Mammary epithelial cell (primary cell): ENCODE measurements at regions of chr11 and their contacts with region 1.

Region 1: DNA sequence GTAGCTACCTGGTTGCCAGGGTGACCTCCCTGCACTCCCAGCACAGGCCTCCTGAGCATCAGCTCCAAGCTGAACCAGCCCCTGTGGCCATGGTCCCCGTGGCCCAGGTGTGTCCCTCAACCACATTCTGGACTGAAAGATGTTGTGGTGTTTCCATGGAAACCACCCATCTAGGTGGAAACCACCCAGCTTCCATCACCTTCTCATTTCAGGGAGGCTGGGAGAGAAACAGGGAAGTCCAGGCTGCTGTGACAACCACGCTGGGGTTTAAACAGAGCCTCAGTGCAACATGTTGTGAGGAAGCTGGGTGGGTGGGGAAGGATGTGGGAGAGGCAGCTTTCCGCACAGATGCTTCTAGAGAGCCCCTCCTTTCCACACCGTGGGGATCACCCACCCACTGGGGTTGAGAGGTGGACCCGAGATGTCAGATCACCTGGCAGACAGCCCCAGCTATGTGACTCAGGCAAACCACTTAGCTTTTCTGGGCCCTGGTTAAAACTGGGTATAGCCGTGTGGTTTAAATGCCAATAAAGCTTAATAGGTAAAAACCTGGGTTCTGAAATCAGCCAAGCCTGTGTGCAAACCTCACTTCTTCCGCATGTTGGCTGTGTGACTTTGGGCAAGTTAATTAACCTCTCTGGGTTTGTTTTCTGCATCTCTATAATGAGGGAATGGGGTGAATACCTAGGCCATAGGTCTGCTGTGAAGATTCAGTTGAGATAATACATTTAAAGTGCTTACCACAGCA is 46.4 kb downstream of the CD82 start:
- DNase-seq: peak; percentile 21
- H3K4me3 ChIP-seq: no peak overlapping the region
- H3K27ac ChIP-seq: no peak overlapping the region
- H3K4me1 ChIP-seq: no peaks in the 10 kb centered on the region
- H3K27me3 ChIP-seq: no peaks in the 10 kb centered on the region
- CTCF ChIP-seq: no peak

Region 2: DNA sequence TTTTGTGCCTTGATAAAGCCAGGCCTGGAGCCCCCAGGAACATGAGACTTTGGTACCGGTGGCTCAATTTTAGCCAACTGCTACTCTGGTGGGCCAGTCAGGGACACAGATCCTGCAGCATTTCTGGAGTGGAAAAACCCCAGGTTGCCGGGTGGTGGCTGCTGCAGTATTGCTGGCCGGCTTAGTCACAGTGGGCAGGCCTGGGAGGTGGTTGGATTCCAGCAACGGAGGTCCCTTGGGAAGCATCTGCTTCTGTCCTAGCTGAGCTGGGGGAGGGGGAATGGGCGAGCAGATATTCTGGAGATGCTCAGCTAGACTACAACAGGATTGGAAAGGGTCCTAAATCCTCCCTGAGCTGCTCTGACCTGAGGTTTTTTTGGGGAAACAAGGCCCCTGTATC is 595.7 kb before region 1 on chr11:
- CTCF ChIA-PET with region 1: no interaction called
- dilution Hi-C with region 1: no loop called
- in situ Hi-C with region 1: no loop called
- intact Hi-C with region 1: no loop called
- DNase-seq: no peak
- H3K4me3 ChIP-seq: no peak overlapping the region
- H3K27ac ChIP-seq: no peak overlapping the region
- H3K4me1 ChIP-seq: no peaks in the 10 kb centered on the region
- H3K27me3 ChIP-seq: no peaks in the 10 kb centered on the region
- CTCF ChIP-seq: no peak

Region 3: GRCh38 chr11:44125598-44125997 is 486.3 kb before region 1 on chr11:
- CTCF ChIA-PET with region 1: no interaction called
- dilution Hi-C with region 1: no loop called
- in situ Hi-C with region 1: no loop called
- intact Hi-C with region 1: no loop called
- DNase-seq: no peak
- H3K4me3 ChIP-seq: no peak overlapping the region
- H3K27ac ChIP-seq: no peak overlapping the region
- H3K4me1 ChIP-seq: no peaks in the 10 kb centered on the region
- H3K27me3 ChIP-seq: no peaks in the 10 kb centered on the region
- CTCF ChIP-seq: no peak

Region 4: GRCh38 chr11:44456544-44457300 is 155.1 kb before region 1 on chr11:
- CTCF ChIA-PET with region 1: no interaction called
- dilution Hi-C with region 1: no loop called
- in situ Hi-C with region 1: no loop called
- intact Hi-C with region 1: no loop called
- DNase-seq: no peak
- H3K4me3 ChIP-seq: no peak overlapping the region
- H3K27ac ChIP-seq: no peak overlapping the region
- H3K4me1 ChIP-seq: no peaks in the 10 kb centered on the region
- H3K27me3 ChIP-seq: no peaks in the 10 kb centered on the region
- CTCF ChIP-seq: peak; percentile 48

Region 5: DNA sequence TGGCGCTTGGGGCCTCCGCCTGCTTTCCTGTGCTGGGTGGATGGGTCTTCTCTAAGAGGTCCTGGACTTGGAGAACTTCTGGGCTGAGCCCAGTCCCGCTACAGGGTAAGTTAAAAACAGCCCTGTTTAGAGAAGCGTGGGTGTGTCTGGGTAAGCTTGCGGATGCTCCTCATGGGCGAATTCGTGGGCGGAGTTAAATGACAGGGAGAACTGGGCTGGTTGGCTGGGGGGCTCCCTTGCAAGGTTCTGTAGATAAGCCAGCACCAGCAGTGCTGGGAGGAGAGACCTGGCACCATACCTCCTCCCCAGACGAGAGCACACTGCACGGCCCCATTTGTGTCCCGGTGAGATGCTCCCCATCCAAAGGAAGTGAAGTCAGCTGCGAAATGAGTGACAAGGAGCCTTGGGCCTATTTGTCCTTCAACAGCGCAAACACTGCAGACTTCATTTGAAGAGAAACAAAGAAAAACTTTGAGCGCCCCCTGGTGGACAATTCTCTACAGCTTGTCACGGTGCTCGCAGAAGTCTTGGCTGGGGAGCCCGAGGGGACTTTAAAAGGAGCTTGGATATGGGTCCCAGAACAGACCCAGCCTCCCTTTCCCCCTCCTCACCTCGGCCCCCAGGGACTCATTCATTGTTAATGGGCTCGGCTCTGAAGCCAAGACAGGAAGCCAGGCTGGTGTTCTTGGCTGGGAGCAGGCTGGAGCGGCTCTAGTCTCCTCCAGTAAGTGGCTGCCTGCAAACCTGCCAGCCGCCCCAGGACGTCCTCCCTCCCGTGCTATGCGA is 299.4 kb after region 1 on chr11:
- CTCF ChIA-PET with region 1: no interaction called
- dilution Hi-C with region 1: no loop called
- in situ Hi-C with region 1: loop called in 1 of 2 experiments (anchors 10 kb)
- intact Hi-C with region 1: no loop called
- DNase-seq: peak; percentile 51
- H3K4me3 ChIP-seq: no peak overlapping the region
- H3K27ac ChIP-seq: no peak overlapping the region
- H3K4me1 ChIP-seq: no peaks in the 10 kb centered on the region
- H3K27me3 ChIP-seq: no peaks in the 10 kb centered on the region
- CTCF ChIP-seq: peak; percentile 75 to 78